G401 (cell line): ENCODE measurements at regions of chr19 and their contacts with region 1.

Region 1: GRCh38 chr19:53958168-53958571 is 4.6 kb upstream of the CACNG8 start:
- DNase-seq: no peak

Region 2: GRCh38 chr19:53792721-53793433 is 165.3 kb before region 1 on chr19:
- in situ Hi-C with region 1: no loop called
- DNase-seq: peak; percentile 82

Region 3: DNA sequence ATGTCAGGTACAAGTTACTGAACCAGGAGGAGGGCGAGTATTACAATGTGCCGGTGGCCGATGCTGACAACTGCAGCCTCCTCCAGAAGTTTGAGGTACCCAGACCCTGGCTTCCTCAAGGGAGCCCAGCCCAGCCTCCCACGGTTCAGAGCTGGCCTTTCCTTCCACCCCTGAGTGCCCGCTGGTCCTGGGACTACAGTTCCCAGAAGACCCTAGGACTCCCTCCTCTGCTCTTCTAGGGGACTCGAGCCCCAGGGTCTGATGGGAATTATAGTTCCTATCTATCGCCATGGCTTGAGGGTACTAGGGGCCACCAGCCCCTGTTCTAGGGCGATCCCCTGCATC is 65.2 kb before region 1 on chr19:
- in situ Hi-C with region 1: loop called (anchors 10 kb)
- DNase-seq: peak; percentile 36

Region 4: DNA sequence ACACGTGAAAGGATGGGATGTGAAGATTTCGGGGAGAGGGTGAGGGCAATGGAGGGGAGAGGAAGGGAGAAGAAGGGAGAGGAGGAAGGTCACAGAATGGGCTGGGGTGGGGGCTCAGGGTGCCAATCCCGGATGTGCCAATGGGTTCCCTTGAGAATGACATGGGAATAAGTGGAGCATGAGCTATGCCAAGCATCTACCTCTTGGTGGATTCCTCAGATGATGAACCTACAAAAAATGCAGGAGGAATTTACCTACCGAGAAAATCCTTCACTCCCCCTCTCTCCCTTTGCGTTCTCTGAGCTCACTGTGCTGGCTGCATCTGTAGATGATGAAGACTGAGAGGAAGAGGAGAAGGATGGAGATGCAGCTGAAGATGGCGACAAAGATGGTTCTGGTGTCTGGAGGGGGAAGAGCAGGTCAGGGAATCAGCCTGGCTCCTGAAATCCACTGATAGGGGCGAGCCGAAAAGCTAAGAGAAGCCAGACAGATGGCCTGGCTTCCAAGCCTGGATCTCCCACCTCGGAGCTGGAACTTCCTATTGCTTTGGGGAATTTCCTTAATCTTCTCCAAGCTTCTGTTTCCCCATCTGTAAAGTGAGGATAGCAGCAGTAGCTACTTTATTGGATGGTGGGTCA is 83.9 kb after region 1 on chr19:
- in situ Hi-C with region 1: loop called (anchors 10 kb)
- DNase-seq: peak; percentile 6